Posterior vena cava (tissue), 2 donors: ENCODE measurements at regions of chr7 and their contacts with region 1.

Region 1: DNA sequence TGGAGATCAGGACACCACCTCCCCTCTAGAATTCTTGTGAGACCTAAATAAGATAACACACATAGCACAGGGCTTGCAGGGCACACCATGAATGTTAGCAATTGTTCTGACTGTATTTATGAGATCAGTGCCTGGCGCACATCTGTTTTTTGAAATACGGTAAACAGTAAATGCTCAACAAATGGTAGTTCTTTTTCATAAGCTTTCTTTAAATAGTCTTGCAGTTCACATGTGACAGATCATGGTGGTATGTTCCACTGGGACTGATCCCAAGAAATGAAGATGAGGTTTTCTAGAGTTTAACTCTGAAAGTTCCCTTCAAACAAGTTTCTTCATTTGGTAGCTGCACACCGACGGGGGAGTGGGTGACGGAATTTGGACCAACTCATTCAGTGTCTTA is 34.8 kb downstream of the CREB5 start:
- DNase-seq: no peak

Region 2: GRCh38 chr7:28239823-28240204 is 207.3 kb before region 1 on chr7:
- intact Hi-C with region 1: no loop called
- DNase-seq: no peak

Region 3: GRCh38 chr7:28458732-28459131 is 11.7 kb after region 1 on chr7:
- intact Hi-C with region 1: loop called in 1 of 2 experiments (anchors 1 kb)
- DNase-seq: no peak

Region 4: DNA sequence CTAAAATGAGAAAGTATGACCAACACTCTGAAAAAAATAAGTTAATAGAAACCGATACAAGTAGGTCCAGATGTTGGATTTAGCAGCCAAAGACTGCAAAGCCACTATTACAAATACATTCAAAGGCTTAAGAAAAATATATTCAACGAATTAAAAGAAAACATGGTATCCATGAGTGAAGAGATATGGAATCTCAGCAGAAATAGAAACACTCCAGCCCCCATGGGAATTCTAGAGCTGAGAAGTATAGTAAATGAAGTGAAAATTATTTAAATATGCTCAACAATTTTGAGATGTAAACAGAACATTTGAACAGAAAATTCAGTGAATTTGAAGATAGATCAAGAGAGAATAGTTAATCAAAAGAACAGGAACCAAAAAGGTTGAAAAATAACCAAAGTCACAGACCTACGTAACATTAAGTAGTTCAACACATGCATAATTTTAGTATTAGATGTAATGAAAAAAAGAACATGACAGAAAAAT is 1287.2 kb after region 1 on chr7:
- intact Hi-C with region 1: no loop called
- DNase-seq: no peak